ENCODE measurements at regions of chr7 and their contacts with region 1.

Region 1: GRCh38 chr7:101058355-101058754 is 26.9 kb upstream of the TRIM56 start:
- DNase-seq: peak; percentile 62
- ATAC-seq: no peak
- H3K4me3 ChIP-seq: no peak overlapping the region
- H3K4me3 Mint-ChIP-seq: no peak overlapping the region
- H3K27ac ChIP-seq: no peak overlapping the region
- H3K27ac Mint-ChIP-seq: peak overlapping the region; percentile 46
- H3K4me1 ChIP-seq: no peaks in the 10 kb centered on the region
- H3K4me1 Mint-ChIP-seq: no peaks in the 10 kb centered on the region
- H3K27me3 ChIP-seq: peaks cover 0 to 38% (median 5%) of the 10 kb centered on the region in 4 experiments
- H3K27me3 Mint-ChIP-seq: peaks cover 41% of the 10 kb centered on the region
- CTCF ChIP-seq: no peak

Region 2: GRCh38 chr7:100088621-100089457 is 969.5 kb before region 1 on chr7 and contains the start of gene COPS6:
- CTCF ChIA-PET with region 1: no interaction called
- POLR2A ChIA-PET with region 1: interaction called, 11 read pairs
- intact Hi-C with region 1: no loop called
- DNase-seq: peak; percentile 90
- ATAC-seq: peak; percentile 90
- H3K4me3 ChIP-seq: peak within 1 kb of the TSS; percentile 68 to 91 (median 74)
- H3K4me3 Mint-ChIP-seq: peak within 1 kb of the TSS; percentile 93
- H3K27ac ChIP-seq: peak within 1 kb of the TSS; percentile 66 to 77
- H3K27ac Mint-ChIP-seq: peak within 1 kb of the TSS; percentile 96
- H3K4me1 ChIP-seq: peaks cover 14 to 18% of the 10 kb centered on the region in 2 donors
- H3K4me1 Mint-ChIP-seq: peaks cover 19% of the 10 kb centered on the region
- H3K27me3 ChIP-seq: no peaks in the 10 kb centered on the region
- H3K27me3 Mint-ChIP-seq: no peaks in the 10 kb centered on the region
- CTCF ChIP-seq: no peak
- total RNA-seq, gene COPS6: 75.1 and 79.6 TPM in 2 replicates

Region 3: GRCh38 chr7:100889761-100890634 is 168.4 kb before region 1 on chr7:
- CTCF ChIA-PET with region 1: interaction called, 32 read pairs
- POLR2A ChIA-PET with region 1: interaction called, 5 read pairs
- intact Hi-C with region 1: no loop called
- DNase-seq: peak; percentile 94
- ATAC-seq: peak; percentile 82
- H3K4me3 ChIP-seq: peak overlapping the region in 4 of 5 experiments; percentile 57 to 80 (median 72)
- H3K4me3 Mint-ChIP-seq: peak overlapping the region; percentile 87
- H3K27ac ChIP-seq: no peak overlapping the region
- H3K27ac Mint-ChIP-seq: peak overlapping the region; percentile 82
- H3K4me1 ChIP-seq: peaks cover 43 to 54% of the 10 kb centered on the region in 2 donors
- H3K4me1 Mint-ChIP-seq: peaks cover 48% of the 10 kb centered on the region
- H3K27me3 ChIP-seq: peaks cover 0 to 46% (median 12%) of the 10 kb centered on the region in 4 experiments
- H3K27me3 Mint-ChIP-seq: peaks cover 22% of the 10 kb centered on the region
- CTCF ChIP-seq: no peak

Region 4: DNA sequence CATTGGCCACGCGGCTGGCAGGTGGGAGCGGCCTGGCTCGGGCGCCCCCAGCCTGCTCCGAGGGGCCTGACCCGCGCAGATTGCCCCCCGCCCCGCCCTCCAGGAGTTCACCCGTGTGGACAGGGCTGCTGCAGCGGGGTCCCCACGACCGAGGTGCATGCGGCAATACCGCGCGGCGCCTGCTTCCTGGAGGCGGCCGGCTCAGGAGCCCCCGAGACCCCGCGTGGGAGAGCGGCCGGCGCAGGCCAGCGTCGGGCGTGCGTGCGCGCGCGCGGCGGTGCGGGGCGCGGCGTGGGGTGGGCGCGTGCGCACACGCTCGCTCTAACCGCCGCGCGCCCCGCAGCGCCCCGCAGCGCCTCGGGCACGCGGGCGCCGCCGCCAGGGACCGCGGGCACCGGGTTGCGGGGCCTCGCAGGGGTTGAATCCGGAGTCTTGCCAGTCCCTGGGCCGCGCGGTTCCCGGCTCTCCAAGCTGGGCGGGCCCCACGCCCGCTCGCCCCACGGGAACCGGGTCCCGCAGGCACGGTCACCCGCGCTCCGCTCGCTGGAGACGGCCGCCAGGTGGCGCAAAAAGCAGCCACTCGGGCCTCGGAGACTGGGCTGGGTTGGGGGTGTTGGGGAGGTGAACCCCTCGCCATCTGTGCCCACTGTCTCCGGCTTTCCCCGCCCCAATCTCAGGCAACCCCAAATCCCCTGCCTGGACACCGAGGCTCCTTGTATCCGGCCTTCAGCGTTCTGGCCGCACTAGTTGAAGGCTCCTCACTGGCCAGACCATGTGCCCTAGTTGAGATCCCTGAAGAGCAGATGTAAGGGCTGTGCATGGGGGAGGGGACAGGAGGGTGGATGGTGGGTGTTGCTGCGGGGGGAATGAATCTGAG is 161.4 kb before region 1 on chr7:
- CTCF ChIA-PET with region 1: interaction called, 32 read pairs
- POLR2A ChIA-PET with region 1: interaction called, 5 read pairs
- intact Hi-C with region 1: no loop called
- DNase-seq: peak; percentile 78
- ATAC-seq: peak; percentile 51
- H3K4me3 ChIP-seq: peak overlapping the region in 3 of 5 experiments; percentile 30 to 42 (median 32)
- H3K4me3 Mint-ChIP-seq: peak overlapping the region; percentile 91
- H3K27ac ChIP-seq: no peak overlapping the region
- H3K27ac Mint-ChIP-seq: no peak overlapping the region
- H3K4me1 ChIP-seq: peaks cover 22 to 23% of the 10 kb centered on the region in 2 donors
- H3K4me1 Mint-ChIP-seq: peaks cover 12% of the 10 kb centered on the region
- H3K27me3 ChIP-seq: peaks cover 0 to 66% (median 23%) of the 10 kb centered on the region in 4 experiments
- H3K27me3 Mint-ChIP-seq: peaks cover 38% of the 10 kb centered on the region
- CTCF ChIP-seq: peak; percentile 79

Region 5: GRCh38 chr7:100991631-100992030 is 66.7 kb before region 1 on chr7:
- CTCF ChIA-PET with region 1: no interaction called
- POLR2A ChIA-PET with region 1: no interaction called
- intact Hi-C with region 1: no loop called
- DNase-seq: no peak
- ATAC-seq: no peak
- H3K4me3 ChIP-seq: no peak overlapping the region
- H3K4me3 Mint-ChIP-seq: no peak overlapping the region
- H3K27ac ChIP-seq: no peak overlapping the region
- H3K27ac Mint-ChIP-seq: no peak overlapping the region
- H3K4me1 ChIP-seq: no peaks in the 10 kb centered on the region
- H3K4me1 Mint-ChIP-seq: no peaks in the 10 kb centered on the region
- H3K27me3 ChIP-seq: no peaks in the 10 kb centered on the region
- H3K27me3 Mint-ChIP-seq: peaks cover 2% of the 10 kb centered on the region
- CTCF ChIP-seq: no peak

Region 6: GRCh38 chr7:101077303-101078089 is 19.1 kb after region 1 on chr7:
- CTCF ChIA-PET with region 1: interaction called, 7 read pairs
- POLR2A ChIA-PET with region 1: no interaction called
- intact Hi-C with region 1: loop called (anchors 1 kb)
- DNase-seq: peak; percentile 88
- ATAC-seq: peak; percentile 91
- H3K4me3 ChIP-seq: no peak overlapping the region
- H3K4me3 Mint-ChIP-seq: peak overlapping the region; percentile 4
- H3K27ac ChIP-seq: peak overlapping the region; percentile 24 to 63
- H3K27ac Mint-ChIP-seq: peak overlapping the region; percentile 18
- H3K4me1 ChIP-seq: peaks cover 7 to 10% of the 10 kb centered on the region in 2 donors
- H3K4me1 Mint-ChIP-seq: peaks cover 9% of the 10 kb centered on the region
- H3K27me3 ChIP-seq: no peaks in the 10 kb centered on the region
- H3K27me3 Mint-ChIP-seq: peaks cover 14% of the 10 kb centered on the region
- CTCF ChIP-seq: peak; percentile 81

Region 7: GRCh38 chr7:101085162-101085987 is 27.0 kb after region 1 on chr7 and contains the start of gene TRIM56:
- CTCF ChIA-PET with region 1: interaction called, 4 read pairs
- POLR2A ChIA-PET with region 1: no interaction called
- intact Hi-C with region 1: loop called (anchors 1 kb)
- DNase-seq: peak; percentile 83
- ATAC-seq: peak; percentile 97
- H3K4me3 ChIP-seq: peak within 1 kb of the TSS; percentile 88 to 98 (median 92)
- H3K4me3 Mint-ChIP-seq: peak within 1 kb of the TSS; percentile 98
- H3K27ac ChIP-seq: peak within 1 kb of the TSS; percentile 86 to 96
- H3K27ac Mint-ChIP-seq: peak within 1 kb of the TSS; percentile 98
- H3K4me1 ChIP-seq: peaks cover 16 to 29% of the 10 kb centered on the region in 2 donors
- H3K4me1 Mint-ChIP-seq: peaks cover 22% of the 10 kb centered on the region
- H3K27me3 ChIP-seq: no peaks in the 10 kb centered on the region
- H3K27me3 Mint-ChIP-seq: peaks cover 3% of the 10 kb centered on the region
- CTCF ChIP-seq: no peak
- total RNA-seq, gene TRIM56: 76.1 and 85.7 TPM in 2 replicates

Region 8: DNA sequence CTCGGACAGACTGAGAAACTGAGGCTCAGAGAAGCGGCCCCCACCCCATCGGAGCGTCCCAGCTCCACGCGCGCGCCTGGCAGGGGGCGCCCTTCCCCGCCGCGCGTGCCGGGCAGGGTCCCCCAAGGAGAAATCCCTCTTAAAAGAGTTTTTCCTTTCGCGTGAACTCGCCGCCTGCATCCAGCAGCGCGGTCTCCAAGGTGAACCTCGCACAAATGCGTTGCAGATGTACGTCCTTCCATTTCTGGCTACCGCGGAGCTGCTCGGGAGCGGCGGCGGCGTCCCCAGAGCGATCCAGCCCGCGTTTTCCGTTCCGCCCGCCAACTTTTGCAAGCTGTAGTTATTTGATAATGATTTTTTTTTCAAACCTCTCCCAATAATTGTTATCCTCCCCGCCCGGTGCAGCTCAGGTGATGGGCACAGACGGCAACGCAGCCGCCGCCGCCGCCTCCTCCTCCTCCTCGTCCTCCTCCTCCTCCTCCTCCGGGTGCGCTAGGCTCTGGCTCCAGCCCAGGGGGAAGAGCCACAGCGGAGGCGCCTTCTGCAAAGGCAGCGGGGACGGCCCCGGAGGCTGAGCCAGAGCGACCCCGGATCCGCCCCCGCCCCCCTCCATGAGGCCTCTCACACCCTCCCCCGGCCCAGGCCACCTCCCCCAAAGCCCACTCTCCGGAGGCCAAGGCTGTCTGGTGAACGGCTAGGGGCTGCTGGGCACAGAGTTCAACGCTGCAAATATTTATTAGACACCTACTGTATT is 685.1 kb after region 1 on chr7:
- CTCF ChIA-PET with region 1: no interaction called
- POLR2A ChIA-PET with region 1: no interaction called
- intact Hi-C with region 1: no loop called
- DNase-seq: peak; percentile 78
- ATAC-seq: peak; percentile 44
- H3K4me3 ChIP-seq: peak overlapping the region; percentile 1 to 62 (median 57)
- H3K4me3 Mint-ChIP-seq: peak overlapping the region; percentile 83
- H3K27ac ChIP-seq: no peak overlapping the region
- H3K27ac Mint-ChIP-seq: peak overlapping the region; percentile 32
- H3K4me1 ChIP-seq: peaks cover 42 to 63% of the 10 kb centered on the region in 2 donors
- H3K4me1 Mint-ChIP-seq: peaks cover 51% of the 10 kb centered on the region
- H3K27me3 ChIP-seq: peaks cover 0 to 8% (median 0%) of the 10 kb centered on the region in 4 experiments
- H3K27me3 Mint-ChIP-seq: no peaks in the 10 kb centered on the region
- CTCF ChIP-seq: peak; percentile 67

Measured in B cell (primary cell).